ENCODE measurements at regions of chr1 and their contacts with region 1.

Region 1: GRCh38 chr1:52296345-52296744 is 69.7 kb downstream of the CC2D1B start:
- DNase-seq: peak in 1 of 3 donors; percentile 61
- ATAC-seq: peak; percentile 93
- H3K4me3 ChIP-seq: no peak overlapping the region
- H3K4me1 ChIP-seq: no peaks in the 10 kb centered on the region
- CTCF ChIP-seq: peak; percentile 25

Region 2: GRCh38 chr1:52127181-52128180 is 168.9 kb before region 1 on chr1:
- intact Hi-C with region 1: loop called in 1 of 2 experiments (anchors 10 kb)
- DNase-seq: peak in 1 of 3 donors; percentile 63
- ATAC-seq: peak; percentile 71
- H3K4me3 ChIP-seq: no peak overlapping the region
- H3K4me1 ChIP-seq: no peaks in the 10 kb centered on the region
- CTCF ChIP-seq: peak; percentile 18

Region 3: GRCh38 chr1:52141513-52142219 is 154.7 kb before region 1 on chr1 and contains the start of gene ZFYVE9:
- intact Hi-C with region 1: loop called in 1 of 2 experiments (anchors 10 kb)
- DNase-seq: peak; percentile 76 to 88 (median 78)
- ATAC-seq: peak; percentile 96
- H3K4me3 ChIP-seq: peak within 1 kb of the TSS; percentile 85
- H3K4me1 ChIP-seq: peaks cover 12% of the 10 kb centered on the region
- CTCF ChIP-seq: peak; percentile 90
- total RNA-seq, gene ZFYVE9: 12.4 to 25.7 (median 19.1) TPM

Region 4: DNA sequence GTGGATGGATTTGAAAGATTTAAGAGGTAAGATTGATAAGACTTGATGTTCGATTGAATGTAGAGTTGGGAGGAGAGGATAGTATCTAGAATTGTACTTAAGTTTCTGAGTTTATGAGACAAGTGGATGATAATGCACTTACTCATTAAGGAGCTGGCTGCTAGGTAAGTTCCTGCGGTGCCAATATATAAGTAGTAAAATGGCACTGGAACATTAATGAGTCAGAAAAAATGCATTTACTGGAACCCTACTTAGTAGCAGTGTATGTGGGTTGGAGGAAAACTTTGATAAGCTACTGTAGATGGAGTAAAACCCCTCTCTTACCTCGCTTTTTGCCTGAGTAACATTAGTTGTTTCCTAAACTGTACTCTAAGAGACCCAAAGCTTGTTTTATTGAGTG is 86.3 kb before region 1 on chr1:
- intact Hi-C with region 1: no loop called
- DNase-seq: no peak
- ATAC-seq: no peak
- H3K4me3 ChIP-seq: no peak overlapping the region
- H3K4me1 ChIP-seq: no peaks in the 10 kb centered on the region
- CTCF ChIP-seq: no peak